ENCODE measurements at regions of chr4 and their contacts with region 1.

Region 1: DNA sequence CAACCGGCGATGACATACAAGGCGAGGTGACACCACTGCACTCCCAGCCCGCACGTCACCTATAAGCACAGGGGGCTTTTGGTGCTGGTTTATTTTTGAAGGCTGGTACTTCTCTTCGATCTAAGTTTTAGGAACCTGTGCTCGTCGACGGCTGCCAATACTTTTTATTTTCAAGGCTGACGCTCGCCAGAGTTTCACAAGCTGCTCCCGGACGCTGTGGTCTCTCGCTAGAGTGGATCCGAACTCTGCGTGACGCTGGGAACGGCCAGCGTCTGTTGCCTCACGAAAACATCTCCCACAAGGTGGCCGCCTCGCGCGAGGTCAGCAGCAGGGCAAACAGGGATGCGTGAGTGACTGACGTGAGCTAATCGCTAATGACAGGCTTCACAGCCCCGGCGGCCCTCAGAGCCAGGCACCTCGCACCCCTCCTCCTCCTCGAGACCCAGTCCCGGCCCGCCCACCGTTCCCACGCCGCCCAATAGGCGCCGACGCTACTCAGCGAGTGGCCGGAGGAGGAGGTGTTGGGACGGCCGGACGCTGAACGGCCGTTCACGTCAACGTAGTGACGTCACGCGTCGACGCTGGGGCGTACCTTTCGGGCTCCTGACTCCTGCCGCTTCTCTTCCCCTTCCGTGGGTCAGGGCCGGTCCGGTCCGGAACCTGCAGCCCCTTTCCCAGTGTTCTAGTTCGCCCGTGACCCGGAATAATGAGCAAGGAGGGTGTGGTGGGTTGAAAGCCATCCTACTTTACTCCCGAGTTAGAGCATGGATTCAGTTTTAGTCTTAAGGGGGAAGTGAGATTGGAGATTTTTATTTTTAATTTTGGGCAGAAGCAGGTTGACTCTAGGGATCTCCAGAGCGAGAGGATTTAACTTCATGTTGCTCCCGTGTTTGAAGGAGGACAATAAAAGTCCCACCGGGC is at the start of gene CLCN3:
- DNase-seq: peak; percentile 98
- H3K4me3 ChIP-seq: peak within 1 kb of the TSS; percentile 76
- H3K27ac ChIP-seq: peak within 1 kb of the TSS; percentile 96
- H3K4me1 ChIP-seq: peaks cover 49% of the 10 kb centered on the region
- H3K27me3 ChIP-seq: no peaks in the 10 kb centered on the region
- CTCF ChIP-seq: no peak
- total RNA-seq, gene CLCN3: 54.1 TPM

Region 2: DNA sequence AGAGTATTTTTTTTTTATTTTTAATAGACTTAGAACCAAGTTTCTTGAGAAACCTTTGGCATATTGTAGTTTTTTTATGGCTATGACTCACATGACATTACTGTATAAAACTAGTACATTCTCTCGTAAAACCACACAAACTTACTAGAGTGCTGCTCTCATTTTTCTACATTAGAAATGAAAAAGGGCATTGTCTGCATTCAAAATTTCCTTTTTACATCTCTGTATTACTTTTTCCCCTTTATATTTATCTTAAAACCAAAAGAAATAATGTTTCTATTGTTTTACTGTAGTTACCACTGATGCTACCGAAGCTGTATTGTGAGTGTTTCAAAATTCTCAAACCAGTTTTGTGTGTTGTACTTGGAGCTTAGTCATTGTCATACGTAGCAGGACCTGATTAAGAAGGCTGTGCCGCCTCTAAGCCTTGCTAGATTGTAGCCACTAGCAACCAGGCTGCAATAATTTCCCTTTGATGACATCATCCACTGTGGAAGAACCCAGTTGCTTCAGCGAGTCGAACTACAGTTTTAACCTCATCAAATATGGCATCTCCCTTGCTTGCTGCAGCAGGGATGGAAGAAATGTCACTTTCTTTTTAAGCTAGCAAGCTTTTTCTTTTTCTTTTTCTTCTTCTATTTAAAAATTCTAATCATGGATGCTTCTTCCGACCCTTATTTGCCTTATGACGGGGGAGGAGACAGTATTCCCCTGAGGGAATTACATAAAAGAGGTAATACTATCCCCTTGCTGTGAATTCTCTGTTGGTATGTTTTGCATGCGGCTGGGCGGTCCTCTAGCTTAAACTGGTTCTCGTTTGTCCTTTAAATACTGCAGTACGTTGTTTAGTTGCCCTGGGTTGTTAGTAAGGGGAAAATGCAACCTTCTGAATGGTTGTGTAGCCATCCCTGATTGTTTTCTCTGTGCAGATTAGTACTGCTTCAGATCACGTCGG is 39.8 kb after region 1 on chr4:
- intact Hi-C with region 1: loop called (anchors 5 kb)
- DNase-seq: no peak
- H3K4me3 ChIP-seq: peak overlapping the region; percentile 63
- H3K27ac ChIP-seq: peak overlapping the region; percentile 88
- H3K4me1 ChIP-seq: peaks cover 62% of the 10 kb centered on the region
- H3K27me3 ChIP-seq: no peaks in the 10 kb centered on the region
- CTCF ChIP-seq: no peak

Region 3: DNA sequence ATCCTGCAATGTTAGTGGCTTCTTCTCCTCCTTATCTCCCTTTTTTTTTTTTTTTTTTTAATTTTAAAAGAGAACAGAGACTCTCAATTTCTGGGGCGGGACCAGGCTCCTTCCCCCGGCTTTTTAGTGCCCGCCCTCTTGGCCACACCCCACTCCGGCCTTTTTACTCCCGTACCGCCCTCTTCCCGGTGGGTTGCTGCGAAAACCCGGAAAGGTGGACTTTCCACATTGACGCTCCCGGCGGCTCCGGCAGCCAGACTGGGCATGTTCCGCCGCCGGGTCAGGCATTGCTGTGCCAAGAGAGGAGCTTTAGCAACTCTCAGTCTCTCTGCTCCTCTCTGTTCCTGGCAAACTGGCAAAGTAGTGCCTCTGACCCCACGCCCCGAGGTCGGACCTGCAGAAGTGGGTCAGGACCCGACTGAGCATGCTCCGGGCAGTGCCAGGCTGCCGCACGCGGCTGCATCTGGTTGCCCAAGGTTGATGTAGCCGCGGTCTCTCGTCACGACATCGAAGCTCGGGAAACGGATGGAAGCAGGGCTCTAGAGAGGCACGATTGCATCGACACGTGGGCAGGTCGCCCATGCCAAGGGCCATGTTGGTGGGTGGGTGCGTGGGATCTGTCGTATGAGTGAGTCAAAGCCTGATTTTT is 407.1 kb after region 1 on chr4:
- intact Hi-C with region 1: loop called (anchors 10 kb)
- DNase-seq: peak; percentile 96
- H3K4me3 ChIP-seq: peak overlapping the region; percentile 99
- H3K27ac ChIP-seq: peak overlapping the region; percentile 93
- H3K4me1 ChIP-seq: peaks cover 21% of the 10 kb centered on the region
- H3K27me3 ChIP-seq: no peaks in the 10 kb centered on the region
- CTCF ChIP-seq: no peak